ENCODE measurements at regions of chr19 and their contacts with region 1.

Region 1: GRCh38 chr19:11197264-11198174 is at the start of gene KANK2:
- DNase-seq: peak; percentile 86
- H3K4me3 ChIP-seq: peak within 1 kb of the TSS; percentile 97
- H3K27ac ChIP-seq: peak within 1 kb of the TSS; percentile 95
- H3K4me1 ChIP-seq: peaks cover 53% of the 10 kb centered on the region
- CTCF ChIP-seq: no peak; the same call in 1 of the 2 replicates
- total RNA-seq, gene KANK2: 135 and 186 TPM in 2 replicates

Region 2: GRCh38 chr19:10653715-10654492 is 543.6 kb before region 1 on chr19 and contains the start of gene ILF3:
- CTCF ChIA-PET with region 1: no interaction called
- POLR2A ChIA-PET with region 1: no interaction called
- intact Hi-C with region 1: loop called (anchors 10 kb)
- DNase-seq: peak; percentile 100
- H3K4me3 ChIP-seq: peak within 1 kb of the TSS; percentile 100
- H3K27ac ChIP-seq: peak within 1 kb of the TSS; percentile 88
- H3K4me1 ChIP-seq: peaks cover 41% of the 10 kb centered on the region
- CTCF ChIP-seq: no peak
- total RNA-seq, gene ILF3: 308 and 347 TPM in 2 replicates

Region 3: DNA sequence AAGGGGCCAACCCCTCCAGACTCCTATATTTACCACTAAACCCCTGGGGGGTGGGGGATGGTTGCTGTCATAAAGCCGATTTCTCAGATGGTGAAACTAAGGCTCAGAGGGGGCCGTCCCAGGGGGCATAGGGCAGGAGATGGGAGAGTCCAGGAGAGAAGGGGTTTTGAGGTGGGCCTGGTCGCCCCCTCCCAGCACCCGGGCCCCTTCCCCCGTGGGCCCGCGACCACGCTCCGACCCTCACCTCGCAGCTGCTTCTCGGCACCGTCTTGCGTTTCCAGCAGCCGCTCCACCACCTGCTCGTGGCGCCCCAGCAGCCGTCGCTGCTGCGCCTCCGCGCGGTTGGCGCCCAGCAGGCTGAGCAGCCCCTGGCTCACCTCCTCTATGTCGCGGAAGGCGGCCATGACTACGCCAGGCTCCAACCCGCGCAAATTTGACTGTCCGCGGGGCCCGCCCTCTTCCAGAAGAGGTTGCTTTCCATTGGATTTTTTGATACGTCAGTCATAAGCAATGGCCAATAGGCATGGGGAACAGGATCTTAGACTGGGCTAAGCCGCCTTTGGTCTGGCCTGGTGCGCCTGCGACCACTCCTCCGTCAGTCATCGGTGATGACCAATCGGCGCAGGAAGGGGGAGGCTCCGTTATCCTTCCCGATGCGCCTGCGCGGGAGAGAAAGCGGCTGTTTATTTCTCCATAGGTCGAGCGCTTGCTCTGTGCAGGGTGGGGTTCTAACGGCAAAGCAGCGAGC is 42.0 kb before region 1 on chr19 and contains the start of gene SPC24:
- CTCF ChIA-PET with region 1: no interaction called
- POLR2A ChIA-PET with region 1: no interaction called
- intact Hi-C with region 1: loop called (anchors 2 kb)
- DNase-seq: peak; percentile 99
- H3K4me3 ChIP-seq: peak within 1 kb of the TSS; percentile 96
- H3K27ac ChIP-seq: peak within 1 kb of the TSS; percentile 69
- H3K4me1 ChIP-seq: peaks cover 22% of the 10 kb centered on the region
- CTCF ChIP-seq: peak; percentile 33; the same call in 1 of the 2 replicates
- total RNA-seq, gene SPC24: 184 and 220 TPM in 2 replicates

Region 4: DNA sequence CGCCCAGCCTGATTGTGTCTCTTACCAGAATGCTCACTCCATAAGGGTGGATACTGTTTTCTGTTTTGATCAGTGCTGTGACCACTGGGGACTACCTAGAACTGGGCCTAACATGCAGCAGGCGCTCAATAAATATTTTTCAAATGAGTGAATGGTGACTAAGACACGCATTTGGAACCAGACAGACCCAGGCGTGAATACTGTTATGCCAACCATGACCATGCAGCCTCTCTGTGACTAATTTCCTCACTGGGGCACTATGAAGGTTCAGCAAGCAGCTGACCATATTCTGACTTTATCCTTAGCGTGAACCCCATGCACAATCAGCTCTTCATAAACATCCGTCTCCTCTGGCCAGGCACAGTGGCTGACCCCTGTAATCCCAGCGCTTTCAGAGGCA is 29.0 kb before region 1 on chr19:
- CTCF ChIA-PET with region 1: no interaction called
- POLR2A ChIA-PET with region 1: no interaction called
- intact Hi-C with region 1: no loop called
- DNase-seq: no peak
- H3K4me3 ChIP-seq: no peak overlapping the region
- H3K27ac ChIP-seq: no peak overlapping the region
- H3K4me1 ChIP-seq: no peaks in the 10 kb centered on the region
- CTCF ChIP-seq: no peak

Measured in OCI-LY7 (cell line).